Activated naive CD4-positive, alpha-beta T cell treated with anti-CD3 and anti-CD28 coated beads for 36 hours (primary cell): ENCODE measurements at regions of chr17 and their contacts with region 1.

Region 1: DNA sequence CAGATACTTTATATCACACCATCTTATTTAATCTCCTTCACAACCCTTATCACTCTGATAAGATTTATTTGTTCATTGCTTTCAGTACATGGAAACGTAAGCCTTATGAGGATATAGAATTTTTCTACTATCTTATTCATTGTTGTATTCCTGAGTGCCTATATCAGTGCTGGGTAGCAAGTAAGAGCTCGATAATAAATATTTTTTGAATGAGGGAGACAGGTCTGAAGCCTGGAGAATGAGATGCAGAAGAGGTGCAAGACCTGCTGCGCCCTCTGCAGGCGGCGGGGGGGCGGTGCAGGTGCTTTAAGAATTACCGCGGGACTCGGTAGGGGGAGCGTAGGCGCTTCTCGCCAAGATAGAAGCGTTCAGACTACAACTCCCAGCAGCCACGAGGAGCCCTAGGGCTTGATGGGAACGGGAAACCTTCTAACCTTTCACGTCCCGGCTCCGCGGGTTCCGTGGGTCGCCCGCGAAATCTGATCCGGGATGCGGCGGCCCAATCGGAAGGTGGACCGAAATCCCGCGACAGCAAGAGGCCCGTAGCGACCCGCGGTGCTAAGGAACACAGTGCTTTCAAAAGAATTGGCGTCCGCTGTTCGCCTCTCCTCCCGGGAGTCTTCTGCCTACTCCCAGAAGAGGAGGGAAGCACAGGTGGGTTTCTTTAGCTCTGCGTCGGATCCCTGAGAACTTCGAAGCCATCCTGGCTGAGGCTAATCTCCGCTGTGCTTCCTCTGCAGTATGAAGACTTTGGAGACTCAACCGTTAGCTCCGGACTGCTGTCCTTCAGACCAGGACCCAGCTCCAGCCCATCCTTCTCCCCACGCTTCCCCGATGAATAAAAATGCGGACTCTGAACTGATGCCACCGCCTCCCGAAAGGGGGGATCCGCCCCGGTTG is at the start of gene WRAP53:
- DNase-seq: peak; percentile 98
- H3K4me3 Mint-ChIP-seq: peak within 1 kb of the TSS; percentile 89
- H3K27ac Mint-ChIP-seq: peak within 1 kb of the TSS; percentile 99
- H3K4me1 Mint-ChIP-seq: peaks cover 33% of the 10 kb centered on the region
- H3K27me3 Mint-ChIP-seq: no peaks in the 10 kb centered on the region
- total RNA-seq, gene WRAP53: 13.7 to 14.7 TPM

Region 2: DNA sequence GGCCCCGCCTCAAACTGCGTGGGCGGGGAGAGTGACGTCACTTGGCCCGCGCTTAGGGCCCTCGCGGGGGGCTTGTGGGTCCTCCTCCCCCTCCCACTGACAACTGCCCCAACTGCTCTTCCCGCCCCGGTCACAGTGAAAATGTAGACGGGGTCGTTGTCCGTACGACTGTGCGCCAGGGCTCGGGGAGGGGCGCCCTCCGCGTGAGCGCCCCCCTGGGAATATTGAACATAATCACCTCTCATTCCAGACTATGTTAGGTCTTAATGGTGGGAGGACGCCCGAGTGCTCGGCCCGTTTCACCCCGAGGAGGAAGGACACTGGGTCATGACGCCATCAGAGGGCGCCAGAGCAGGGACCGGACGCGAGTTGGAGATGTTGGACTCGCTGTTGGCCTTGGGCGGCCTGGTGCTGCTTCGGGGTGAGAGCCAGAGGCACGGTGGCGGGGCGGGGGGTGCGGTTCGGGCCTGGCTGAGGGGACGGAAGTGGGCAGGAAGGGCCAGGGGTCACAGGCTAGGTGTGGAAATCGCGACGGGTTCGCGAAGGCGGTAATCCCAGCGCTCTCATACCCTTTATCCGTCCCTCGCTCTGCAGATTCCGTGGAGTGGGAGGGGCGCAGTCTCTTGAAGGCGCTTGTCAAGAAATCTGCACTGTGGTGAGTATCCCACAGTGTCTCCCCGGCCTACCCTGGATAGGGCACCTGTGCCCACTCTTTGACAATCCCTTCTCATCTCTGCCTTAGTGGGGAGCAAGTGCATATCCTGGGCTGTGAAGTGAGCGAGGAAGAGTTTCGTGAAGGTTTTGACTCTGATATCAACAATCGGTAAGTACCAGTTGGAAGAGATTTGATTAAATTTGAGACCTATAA is 435.7 kb before region 1 on chr17 and contains the start of gene ELP5:
- CTCF ChIA-PET with region 1: no interaction called
- intact Hi-C with region 1: loop called (anchors 5 kb)
- DNase-seq: peak; percentile 93
- H3K4me3 Mint-ChIP-seq: peak within 1 kb of the TSS; percentile 86
- H3K27ac Mint-ChIP-seq: peak within 1 kb of the TSS; percentile 99
- H3K4me1 Mint-ChIP-seq: peaks cover 34% of the 10 kb centered on the region
- H3K27me3 Mint-ChIP-seq: no peaks in the 10 kb centered on the region
- total RNA-seq, gene ELP5: 52.4 to 53.5 TPM

Region 3: GRCh38 chr17:7351665-7352501 is 336.3 kb before region 1 on chr17 and contains the start of gene KCTD11:
- CTCF ChIA-PET with region 1: interaction called, 6 read pairs
- intact Hi-C with region 1: loop called (anchors 2 kb)
- DNase-seq: peak; percentile 76
- H3K4me3 Mint-ChIP-seq: peak within 1 kb of the TSS; percentile 62
- H3K27ac Mint-ChIP-seq: peak within 1 kb of the TSS; percentile 51
- H3K4me1 Mint-ChIP-seq: peaks cover 43% of the 10 kb centered on the region
- H3K27me3 Mint-ChIP-seq: no peaks in the 10 kb centered on the region
- total RNA-seq, gene KCTD11: 0.41 to 0.47 TPM

Region 4: DNA sequence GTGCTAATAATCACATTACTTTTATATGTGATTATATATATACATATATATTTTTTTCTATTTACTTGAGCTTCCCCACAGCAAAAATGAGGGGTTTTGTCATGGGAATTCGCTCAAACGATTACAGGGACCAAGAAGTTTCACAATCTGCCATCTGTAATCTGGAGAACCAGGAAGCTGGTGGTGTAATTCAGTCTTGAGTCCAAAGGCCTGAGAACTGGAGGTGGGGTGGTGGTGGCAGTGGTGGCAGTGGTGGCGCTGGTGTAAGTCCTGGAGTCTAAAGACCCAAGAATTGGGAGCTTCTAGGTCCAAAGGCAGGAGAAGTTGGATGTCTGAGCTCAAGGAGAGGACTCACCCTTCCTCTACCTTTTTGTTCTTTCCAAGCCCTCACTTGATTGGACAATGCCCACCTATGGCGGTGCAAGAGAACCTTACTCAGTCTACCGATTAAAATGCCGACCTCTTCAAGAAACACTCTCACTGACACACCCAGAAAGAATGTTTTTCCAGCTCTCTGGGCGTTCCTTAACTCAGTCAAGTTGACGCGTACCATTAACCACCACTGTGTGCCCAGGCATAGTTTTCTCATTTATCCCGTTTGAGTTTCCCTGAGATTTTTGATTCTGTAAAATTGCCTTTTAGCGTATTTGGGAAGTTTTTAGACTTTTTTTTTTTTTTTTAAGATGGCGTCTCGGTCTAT is 172.1 kb before region 1 on chr17:
- CTCF ChIA-PET with region 1: interaction called, 3 read pairs
- intact Hi-C with region 1: loop called (anchors 10 kb)
- DNase-seq: no peak
- H3K4me3 Mint-ChIP-seq: no peak overlapping the region
- H3K27ac Mint-ChIP-seq: no peak overlapping the region
- H3K4me1 Mint-ChIP-seq: peaks cover 2% of the 10 kb centered on the region
- H3K27me3 Mint-ChIP-seq: no peaks in the 10 kb centered on the region

Region 5: DNA sequence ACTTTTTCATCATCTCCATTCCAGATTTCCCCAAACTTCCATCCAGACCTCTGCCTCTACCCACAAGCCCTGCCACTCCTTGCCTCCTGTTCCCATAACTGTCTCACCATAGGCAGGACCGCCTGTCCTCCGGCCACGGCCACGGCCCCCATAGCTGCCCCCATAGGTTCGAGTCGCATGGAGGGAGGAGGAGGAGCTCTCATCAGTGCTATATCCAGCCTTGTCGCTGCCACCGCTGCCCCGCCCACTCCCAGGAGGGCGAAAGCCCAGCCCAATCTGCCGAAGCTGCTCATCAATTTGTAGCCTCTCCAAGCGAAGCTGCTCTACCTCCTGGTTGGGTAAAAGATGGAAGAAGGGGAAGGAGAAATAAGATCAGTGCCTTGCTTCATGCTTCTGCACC is 94.9 kb before region 1 on chr17:
- CTCF ChIA-PET with region 1: no interaction called
- intact Hi-C with region 1: no loop called
- DNase-seq: no peak
- H3K4me3 Mint-ChIP-seq: no peak overlapping the region
- H3K27ac Mint-ChIP-seq: no peak overlapping the region
- H3K4me1 Mint-ChIP-seq: peaks cover 2% of the 10 kb centered on the region
- H3K27me3 Mint-ChIP-seq: no peaks in the 10 kb centered on the region

Region 6: GRCh38 chr17:7614422-7615264 is 73.5 kb before region 1 on chr17 and contains the start of gene FXR2:
- CTCF ChIA-PET with region 1: interaction called, 7 read pairs
- intact Hi-C with region 1: loop called (anchors 1 kb)
- DNase-seq: peak; percentile 100
- H3K4me3 Mint-ChIP-seq: peak within 1 kb of the TSS; percentile 83
- H3K27ac Mint-ChIP-seq: peak within 1 kb of the TSS; percentile 84
- H3K4me1 Mint-ChIP-seq: peaks cover 32% of the 10 kb centered on the region
- H3K27me3 Mint-ChIP-seq: no peaks in the 10 kb centered on the region
- total RNA-seq, gene FXR2: 29.7 to 36.8 TPM

Region 7: GRCh38 chr17:7844292-7845154 is 156.4 kb after region 1 on chr17:
- CTCF ChIA-PET with region 1: no interaction called
- intact Hi-C with region 1: loop called (anchors 2 kb)
- DNase-seq: peak; percentile 90
- H3K4me3 Mint-ChIP-seq: peak overlapping the region; percentile 89
- H3K27ac Mint-ChIP-seq: peak overlapping the region; percentile 99
- H3K4me1 Mint-ChIP-seq: peaks cover 46% of the 10 kb centered on the region
- H3K27me3 Mint-ChIP-seq: no peaks in the 10 kb centered on the region

Region 8: DNA sequence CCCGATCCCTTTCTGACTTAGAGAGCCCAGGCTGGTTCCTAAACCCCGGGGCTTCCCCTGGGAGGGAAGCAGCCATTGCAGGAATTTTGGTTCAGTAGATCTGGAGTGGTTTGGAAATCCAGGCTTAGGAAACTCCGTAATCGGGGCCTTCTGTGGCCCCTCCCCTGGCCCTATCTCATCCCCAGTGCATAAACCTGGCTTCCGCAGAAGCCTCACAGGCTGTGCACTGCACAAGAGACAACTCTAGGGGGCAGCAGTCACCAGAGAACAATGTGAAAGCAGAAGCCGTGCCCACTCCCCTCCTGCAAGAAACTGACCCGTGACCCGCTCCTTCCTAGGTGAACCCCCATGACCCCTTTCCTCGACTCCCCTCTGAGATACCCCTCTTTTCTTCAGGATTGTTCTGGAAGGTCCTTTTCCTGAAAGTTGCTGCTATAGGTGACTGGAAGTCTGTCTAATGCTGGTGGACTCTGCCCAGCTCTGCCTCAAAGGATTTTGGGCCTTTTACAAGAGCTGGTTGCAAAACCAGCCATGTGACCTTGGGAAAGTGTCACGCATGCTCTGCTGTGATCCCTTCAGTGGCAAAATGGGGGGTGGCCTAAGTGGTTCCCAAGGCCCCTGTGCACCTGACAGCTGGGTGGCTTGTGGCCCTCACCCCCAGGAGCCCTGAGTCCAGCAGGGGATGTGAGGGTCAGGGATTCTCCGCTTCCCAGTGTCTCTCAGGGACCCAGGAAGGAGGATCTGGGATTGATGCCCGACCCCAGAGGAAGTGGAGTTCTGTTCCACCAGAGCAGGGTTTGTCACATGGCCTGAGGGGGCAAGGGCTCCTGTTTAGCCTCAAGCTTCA is 328.7 kb after region 1 on chr17:
- CTCF ChIA-PET with region 1: no interaction called
- intact Hi-C with region 1: no loop called
- DNase-seq: peak; percentile 80
- H3K4me3 Mint-ChIP-seq: peak overlapping the region; percentile 61
- H3K27ac Mint-ChIP-seq: no peak overlapping the region
- H3K4me1 Mint-ChIP-seq: peaks cover 4% of the 10 kb centered on the region
- H3K27me3 Mint-ChIP-seq: peaks cover 6% of the 10 kb centered on the region

Region 9: DNA sequence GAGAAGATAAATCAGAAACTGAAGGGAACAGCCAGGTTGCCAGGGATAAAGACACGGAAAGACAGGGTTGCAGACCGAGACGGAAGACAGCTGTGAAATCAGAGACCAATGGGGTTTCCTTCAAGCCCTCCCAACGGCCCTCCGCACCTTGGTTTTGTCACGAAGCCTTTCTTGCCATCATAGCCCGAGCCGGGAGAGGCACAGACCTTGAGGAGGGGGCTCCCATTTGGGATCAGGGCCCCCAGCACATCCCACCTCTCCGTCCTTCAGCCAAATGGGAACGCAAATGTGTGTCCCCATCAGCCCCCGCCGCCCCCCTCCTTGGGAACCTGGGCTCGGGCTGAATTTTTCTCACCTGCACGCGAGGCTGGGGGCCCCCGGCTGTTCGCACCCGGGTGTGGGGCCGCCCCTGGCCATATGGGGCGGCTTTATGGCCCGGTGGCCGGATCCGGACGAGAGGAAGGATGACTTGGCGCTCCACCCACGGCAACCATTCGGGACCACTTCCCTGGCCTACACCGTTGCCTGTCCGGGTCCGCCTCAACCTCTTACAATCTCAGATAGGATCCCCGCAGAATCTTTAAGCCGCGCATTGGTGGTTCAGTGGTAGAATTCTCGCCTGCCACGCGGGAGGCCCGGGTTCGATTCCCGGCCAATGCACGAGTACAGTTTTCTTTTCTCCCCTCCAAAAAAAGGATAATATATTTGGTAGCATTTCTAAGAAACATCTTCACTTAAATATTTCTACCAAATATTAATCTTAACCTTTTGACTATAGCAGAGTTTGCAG is 437.2 kb after region 1 on chr17:
- CTCF ChIA-PET with region 1: interaction called, 10 read pairs
- intact Hi-C with region 1: no loop called
- DNase-seq: peak; percentile 96
- H3K4me3 Mint-ChIP-seq: peak overlapping the region; percentile 84
- H3K27ac Mint-ChIP-seq: peak overlapping the region; percentile 90
- H3K4me1 Mint-ChIP-seq: peaks cover 43% of the 10 kb centered on the region
- H3K27me3 Mint-ChIP-seq: peaks cover 29% of the 10 kb centered on the region

Region 10: DNA sequence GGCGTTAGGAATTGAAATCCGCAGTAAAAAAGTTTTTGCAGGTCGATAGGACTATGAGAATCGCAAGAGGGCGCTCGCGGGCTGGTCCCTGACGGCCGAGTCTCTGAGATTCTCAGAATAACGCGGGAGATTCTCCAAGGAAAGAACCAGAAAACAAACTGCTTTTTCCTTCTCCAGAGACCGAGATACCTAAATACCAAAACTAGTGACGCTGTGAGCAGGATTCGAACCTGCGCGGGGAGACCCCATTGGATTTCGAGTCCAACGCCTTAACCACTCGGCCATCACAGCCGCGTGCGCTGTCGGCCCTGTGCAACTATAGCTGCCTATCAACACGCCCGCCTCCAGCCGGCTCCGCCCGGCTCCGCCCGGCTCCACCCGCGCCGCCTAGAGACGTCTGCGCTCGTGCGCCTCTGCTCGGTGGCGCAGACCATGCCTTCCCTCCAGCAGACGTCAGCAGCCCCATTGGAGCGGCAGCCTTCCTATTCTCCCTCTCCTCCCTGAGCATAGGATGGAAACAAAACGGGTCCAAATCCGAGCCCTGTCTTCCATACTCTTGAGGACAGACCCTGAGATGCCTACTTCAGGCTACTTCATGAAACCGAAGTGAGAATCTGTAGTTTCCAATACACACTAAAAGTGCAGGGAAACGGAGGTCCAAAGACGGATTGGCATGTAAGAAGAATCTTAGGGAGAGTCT is 450.7 kb after region 1 on chr17:
- CTCF ChIA-PET with region 1: no interaction called
- intact Hi-C with region 1: no loop called
- DNase-seq: peak; percentile 98
- H3K4me3 Mint-ChIP-seq: no peak overlapping the region
- H3K27ac Mint-ChIP-seq: no peak overlapping the region
- H3K4me1 Mint-ChIP-seq: peaks cover 13% of the 10 kb centered on the region
- H3K27me3 Mint-ChIP-seq: no peaks in the 10 kb centered on the region